ENCODE measurements at regions of chr7 and their contacts with region 1.

Region 1: DNA sequence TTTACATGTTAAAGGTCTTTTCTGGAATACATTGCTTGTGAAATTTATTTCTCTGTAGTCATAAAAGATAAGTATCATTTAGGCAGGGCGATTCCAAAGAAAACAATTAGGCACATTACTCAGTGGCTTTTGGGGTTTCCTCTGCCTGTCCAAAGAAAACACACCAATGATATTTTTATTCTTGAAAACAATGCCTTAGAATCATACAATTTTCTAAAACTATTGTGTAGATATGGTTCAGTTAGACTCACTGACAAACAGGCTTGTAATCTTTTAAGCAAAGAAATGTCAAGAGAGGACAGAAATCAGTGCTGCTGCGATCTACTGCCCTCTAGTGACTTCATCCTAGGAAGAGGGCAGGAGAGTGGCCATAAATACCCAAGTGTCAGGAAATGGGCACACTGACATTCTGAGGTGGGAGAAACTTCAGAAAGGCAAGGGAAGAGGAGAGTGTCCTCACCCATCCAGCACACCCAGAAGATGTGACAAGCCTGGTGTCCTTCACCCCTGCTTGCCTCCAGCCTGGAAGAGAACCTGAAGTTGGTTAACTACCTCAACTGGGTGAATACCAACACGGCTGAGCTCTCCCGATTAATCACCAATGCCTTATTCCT is 120.5 kb downstream of the GALNT11 start:
- DNase-seq: peak in 7 of 9 donors; percentile 30 to 60 (median 54)
- ATAC-seq: peak; percentile 63
- H3K4me3 ChIP-seq: no peak overlapping the region
- H3K4me3 Mint-ChIP-seq: peak overlapping the region; percentile 17 to 77 (median 68)
- H3K27ac ChIP-seq: peak overlapping the region; percentile 69
- H3K27ac Mint-ChIP-seq: peak overlapping the region; percentile 88 to 97 (median 93)
- H3K4me1 ChIP-seq: peaks cover 25 to 43% of the 10 kb centered on the region in 2 donors
- H3K4me1 Mint-ChIP-seq: peaks cover 36 to 51% (median 49%) of the 10 kb centered on the region in 7 donors
- H3K27me3 ChIP-seq: no peaks in the 10 kb centered on the region
- H3K27me3 Mint-ChIP-seq: no peaks in the 10 kb centered on the region

Region 2: GRCh38 chr7:151782598-151783448 is 363.1 kb before region 1 on chr7:
- CTCF ChIA-PET with region 1: no interaction called
- POLR2A ChIA-PET with region 1: no interaction called
- intact Hi-C with region 1: loop called (anchors 1 kb)
- DNase-seq: peak; percentile 33 to 73 (median 56)
- ATAC-seq: peak; percentile 91
- H3K4me3 ChIP-seq: peak overlapping the region; percentile 57
- H3K4me3 Mint-ChIP-seq: peak overlapping the region; percentile 77 to 95 (median 88)
- H3K27ac ChIP-seq: peak overlapping the region; percentile 53
- H3K27ac Mint-ChIP-seq: peak overlapping the region in 8 of 9 donors; percentile 46 to 93 (median 82)
- H3K4me1 ChIP-seq: peaks cover 0 to 5% of the 10 kb centered on the region in 2 donors
- H3K4me1 Mint-ChIP-seq: peaks cover 10 to 25% (median 16%) of the 10 kb centered on the region in 7 donors
- H3K27me3 ChIP-seq: no peaks in the 10 kb centered on the region
- H3K27me3 Mint-ChIP-seq: peaks cover 0 to 2% (median 0%) of the 10 kb centered on the region in 5 donors

Region 3: DNA sequence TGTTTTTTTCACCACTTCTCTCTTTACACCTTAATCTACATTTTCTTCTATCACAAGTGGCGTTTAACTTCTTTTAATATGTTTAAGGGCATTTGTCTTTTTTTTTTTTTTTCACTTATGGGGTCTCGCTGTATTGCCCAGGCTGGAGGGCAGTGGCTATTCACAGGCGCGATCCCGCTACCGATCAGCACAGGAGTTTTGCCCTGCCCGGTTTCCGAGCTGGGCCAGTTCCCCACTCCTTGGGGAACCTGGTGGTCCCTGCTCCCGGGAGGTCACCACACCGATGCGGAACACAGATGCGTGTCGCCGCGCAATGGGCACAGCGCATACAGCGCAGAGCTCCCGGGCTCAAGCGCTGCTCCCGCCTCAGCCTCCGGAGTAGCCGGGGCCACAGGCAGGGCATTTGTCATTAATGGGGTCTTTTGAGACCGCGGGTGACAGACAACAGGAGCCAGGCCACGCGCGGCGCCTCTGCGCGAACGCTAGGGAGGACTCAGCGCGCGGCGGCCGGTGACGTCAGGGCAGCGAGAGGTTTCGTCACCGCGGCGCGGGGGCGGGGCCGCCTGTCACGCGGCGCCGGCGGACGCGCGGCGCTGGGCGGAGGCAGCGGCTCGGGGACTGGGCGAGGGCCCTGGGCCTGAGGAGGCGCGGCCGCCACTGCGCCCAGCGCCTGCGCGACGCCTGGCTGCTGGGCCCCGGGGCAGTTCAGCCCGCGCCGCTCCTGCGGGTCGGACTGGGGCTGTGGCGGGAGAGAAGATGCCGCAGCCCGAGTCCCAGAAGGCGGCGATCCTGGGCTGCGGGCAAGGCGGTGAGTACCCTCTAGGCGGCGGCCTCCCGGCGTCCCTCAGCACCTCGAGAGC is 120.7 kb before region 1 on chr7 and contains the start of gene GALNT11:
- CTCF ChIA-PET with region 1: interaction called, 5 read pairs
- POLR2A ChIA-PET with region 1: interaction called, 6 read pairs
- intact Hi-C with region 1: loop called (anchors 1 kb)
- DNase-seq: peak; percentile 82 to 95 (median 91)
- ATAC-seq: peak; percentile 96
- H3K4me3 ChIP-seq: peak within 1 kb of the TSS; percentile 75
- H3K4me3 Mint-ChIP-seq: peak within 1 kb of the TSS; percentile 85 to 92 (median 88)
- H3K27ac ChIP-seq: peak within 1 kb of the TSS; percentile 88
- H3K27ac Mint-ChIP-seq: peak within 1 kb of the TSS; percentile 85 to 96 (median 95)
- H3K4me1 ChIP-seq: peaks cover 7 to 22% of the 10 kb centered on the region in 2 donors
- H3K4me1 Mint-ChIP-seq: peaks cover 12 to 45% (median 39%) of the 10 kb centered on the region in 7 donors
- H3K27me3 ChIP-seq: no peaks in the 10 kb centered on the region
- H3K27me3 Mint-ChIP-seq: peaks cover 0 to 11% (median 0%) of the 10 kb centered on the region in 5 donors
- total RNA-seq, gene GALNT11: 16.0 to 29.5 (median 17.9) TPM

Region 4: GRCh38 chr7:152424348-152425108 is 278.6 kb after region 1 on chr7:
- CTCF ChIA-PET with region 1: no interaction called
- POLR2A ChIA-PET with region 1: no interaction called
- intact Hi-C with region 1: loop called in 1 of 2 experiments (anchors 10 kb)
- DNase-seq: no peak
- ATAC-seq: no peak
- H3K4me3 ChIP-seq: no peak overlapping the region
- H3K4me3 Mint-ChIP-seq: peak overlapping the region in 4 of 10 donors; percentile 15 to 56 (median 54)
- H3K27ac ChIP-seq: no peak overlapping the region
- H3K27ac Mint-ChIP-seq: peak overlapping the region in 4 of 9 donors; percentile 10 to 53 (median 43)
- H3K4me1 ChIP-seq: peaks cover 7 to 22% of the 10 kb centered on the region in 2 donors
- H3K4me1 Mint-ChIP-seq: peaks cover 45 to 80% (median 75%) of the 10 kb centered on the region in 7 donors
- H3K27me3 ChIP-seq: no peaks in the 10 kb centered on the region
- H3K27me3 Mint-ChIP-seq: no peaks in the 10 kb centered on the region

Measured in naive thymus-derived CD4-positive, alpha-beta T cell (primary cell).